CD8-positive, alpha-beta T cell (primary cell): ENCODE measurements at regions of chr4 and their contacts with region 1.

Region 1: GRCh38 chr4:53908661-53909078 is 155.7 kb downstream of the CHIC2 start:
- DNase-seq: peak in 2 of 9 experiments; percentile 31 to 48
- ATAC-seq: no peak
- H3K4me3 ChIP-seq: no peak overlapping the region
- H3K4me3 Mint-ChIP-seq: no peak overlapping the region
- H3K27ac ChIP-seq: no peak overlapping the region
- H3K27ac Mint-ChIP-seq: no peak overlapping the region
- H3K4me1 ChIP-seq: peaks cover 7% of the 10 kb centered on the region
- H3K4me1 Mint-ChIP-seq: peaks cover 13% of the 10 kb centered on the region
- H3K27me3 ChIP-seq: peaks cover 0 to 8% of the 10 kb centered on the region in 2 experiments
- H3K27me3 Mint-ChIP-seq: peaks cover 47% of the 10 kb centered on the region
- CTCF ChIP-seq: no peak

Region 2: DNA sequence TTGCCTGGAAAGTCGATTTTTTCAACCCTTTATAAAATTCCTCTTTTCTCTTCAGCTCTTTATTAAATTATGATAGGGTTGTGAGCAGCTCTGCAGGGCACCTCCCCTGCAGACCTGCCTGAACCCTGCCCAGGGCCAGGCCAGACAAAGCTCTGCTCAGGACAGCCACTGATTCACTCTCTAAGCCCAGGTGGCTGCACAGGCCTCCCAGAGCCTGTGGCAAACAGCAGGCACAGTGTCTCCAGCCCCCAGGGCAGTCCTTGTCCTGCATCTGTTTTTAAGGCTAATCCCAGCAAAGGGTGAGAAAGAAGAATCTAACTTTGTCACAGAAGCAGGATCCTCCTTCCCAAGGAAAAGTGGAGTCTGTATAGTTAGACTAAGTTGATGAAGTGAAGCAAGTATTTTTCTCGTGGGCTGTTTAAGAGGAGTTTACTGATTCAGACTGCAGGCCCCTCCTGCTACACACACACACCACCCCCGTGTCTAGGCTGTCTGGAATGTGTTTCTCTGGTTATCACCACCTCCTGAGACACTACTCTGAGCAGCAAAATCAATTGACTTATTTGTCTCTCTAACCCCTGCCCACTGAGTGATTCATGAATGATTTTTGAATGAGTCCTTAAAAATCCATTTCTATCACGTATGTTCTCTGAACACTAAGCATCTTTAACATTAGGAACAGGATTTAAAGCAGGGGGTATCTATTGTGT is 54.0 kb after region 1 on chr4:
- CTCF ChIA-PET with region 1: no interaction called
- POLR2A ChIA-PET with region 1: no interaction called
- intact Hi-C with region 1: loop called in 1 of 2 experiments (anchors 1 kb)
- DNase-seq: no peak
- ATAC-seq: no peak
- H3K4me3 ChIP-seq: no peak overlapping the region
- H3K4me3 Mint-ChIP-seq: no peak overlapping the region
- H3K27ac ChIP-seq: no peak overlapping the region
- H3K27ac Mint-ChIP-seq: no peak overlapping the region
- H3K4me1 ChIP-seq: no peaks in the 10 kb centered on the region
- H3K4me1 Mint-ChIP-seq: no peaks in the 10 kb centered on the region
- H3K27me3 ChIP-seq: no peaks in the 10 kb centered on the region
- H3K27me3 Mint-ChIP-seq: no peaks in the 10 kb centered on the region
- CTCF ChIP-seq: no peak